Endothelial cell of umbilical vein (primary cell): ENCODE measurements at regions of chr1 and their contacts with region 1.

Region 1: DNA sequence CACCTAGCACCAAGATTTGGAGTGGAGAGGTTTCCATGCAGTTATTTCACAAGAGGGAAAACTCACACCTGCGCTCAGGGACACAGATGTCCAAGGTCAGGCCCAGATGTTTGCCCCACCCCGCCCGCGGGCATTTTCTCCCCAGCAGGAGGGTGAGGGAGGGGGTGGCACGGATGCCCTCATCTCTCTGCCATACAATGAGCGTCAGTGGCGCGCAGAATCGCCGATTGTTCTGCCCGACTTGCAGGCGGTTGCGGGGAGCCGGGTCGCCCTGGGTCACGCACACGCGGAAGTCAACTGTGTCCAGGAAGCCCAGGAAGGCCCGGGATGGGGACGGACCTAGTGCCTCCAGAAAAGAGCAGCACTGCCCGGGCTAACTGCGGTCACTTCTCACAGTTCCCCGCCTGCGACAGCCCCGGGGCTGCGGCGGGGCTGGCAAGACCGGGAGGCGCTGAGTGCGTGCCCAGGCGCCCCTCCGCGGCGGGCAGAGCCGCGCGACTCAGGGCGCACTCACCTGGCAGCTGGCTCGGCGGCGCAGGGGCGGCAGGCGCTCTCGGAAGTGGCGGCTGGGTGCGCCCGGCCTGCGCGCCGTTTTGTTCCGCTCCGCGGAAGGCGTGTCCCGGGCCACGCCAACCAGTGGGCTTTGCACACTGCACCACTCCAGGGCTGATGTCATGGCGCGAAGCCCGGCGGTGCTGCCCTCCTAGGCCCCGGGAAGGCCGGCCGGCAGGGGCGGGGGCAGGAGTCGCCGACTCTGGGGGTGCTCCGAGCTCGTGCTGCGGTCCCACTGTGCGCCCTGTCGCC is at the start of gene CSRP1:
- DNase-seq: peak; percentile 74
- H3K4me3 ChIP-seq: peak within 1 kb of the TSS; percentile 47 to 84 (median 72)
- H3K27ac ChIP-seq: peak within 1 kb of the TSS; percentile 89
- H3K4me1 ChIP-seq: peaks cover 49% of the 10 kb centered on the region
- H3K27me3 ChIP-seq: no peaks in the 10 kb centered on the region
- CTCF ChIP-seq: no peak
- POLR2A ChIP-seq: peak; percentile 96
- total RNA-seq, gene CSRP1: 332 and 393 TPM in 2 replicates

Region 2: GRCh38 chr1:201488817-201489589 is 17.8 kb before region 1 on chr1:
- CTCF ChIA-PET with region 1: interaction called, 1,317 read pairs
- POLR2A ChIA-PET with region 1: interaction called, 124 read pairs
- dilution Hi-C with region 1: no loop called
- intact Hi-C with region 1: loop called (anchors 1 kb)
- DNase-seq: peak; percentile 96
- H3K4me3 ChIP-seq: no peak overlapping the region
- H3K27ac ChIP-seq: peak overlapping the region; percentile 90
- H3K4me1 ChIP-seq: peaks cover 75% of the 10 kb centered on the region
- H3K27me3 ChIP-seq: no peaks in the 10 kb centered on the region
- CTCF ChIP-seq: no peak
- POLR2A ChIP-seq: peak; percentile 28

Region 3: GRCh38 chr1:201495471-201496295 is 11.1 kb before region 1 on chr1:
- CTCF ChIA-PET with region 1: interaction called, 1,317 read pairs
- POLR2A ChIA-PET with region 1: interaction called, 124 read pairs
- dilution Hi-C with region 1: no loop called
- intact Hi-C with region 1: loop called (anchors 1 kb)
- DNase-seq: peak; percentile 86
- H3K4me3 ChIP-seq: no peak overlapping the region
- H3K27ac ChIP-seq: peak overlapping the region; percentile 26
- H3K4me1 ChIP-seq: peaks cover 65% of the 10 kb centered on the region
- H3K27me3 ChIP-seq: no peaks in the 10 kb centered on the region
- CTCF ChIP-seq: no peak
- POLR2A ChIP-seq: no peak

Region 4: DNA sequence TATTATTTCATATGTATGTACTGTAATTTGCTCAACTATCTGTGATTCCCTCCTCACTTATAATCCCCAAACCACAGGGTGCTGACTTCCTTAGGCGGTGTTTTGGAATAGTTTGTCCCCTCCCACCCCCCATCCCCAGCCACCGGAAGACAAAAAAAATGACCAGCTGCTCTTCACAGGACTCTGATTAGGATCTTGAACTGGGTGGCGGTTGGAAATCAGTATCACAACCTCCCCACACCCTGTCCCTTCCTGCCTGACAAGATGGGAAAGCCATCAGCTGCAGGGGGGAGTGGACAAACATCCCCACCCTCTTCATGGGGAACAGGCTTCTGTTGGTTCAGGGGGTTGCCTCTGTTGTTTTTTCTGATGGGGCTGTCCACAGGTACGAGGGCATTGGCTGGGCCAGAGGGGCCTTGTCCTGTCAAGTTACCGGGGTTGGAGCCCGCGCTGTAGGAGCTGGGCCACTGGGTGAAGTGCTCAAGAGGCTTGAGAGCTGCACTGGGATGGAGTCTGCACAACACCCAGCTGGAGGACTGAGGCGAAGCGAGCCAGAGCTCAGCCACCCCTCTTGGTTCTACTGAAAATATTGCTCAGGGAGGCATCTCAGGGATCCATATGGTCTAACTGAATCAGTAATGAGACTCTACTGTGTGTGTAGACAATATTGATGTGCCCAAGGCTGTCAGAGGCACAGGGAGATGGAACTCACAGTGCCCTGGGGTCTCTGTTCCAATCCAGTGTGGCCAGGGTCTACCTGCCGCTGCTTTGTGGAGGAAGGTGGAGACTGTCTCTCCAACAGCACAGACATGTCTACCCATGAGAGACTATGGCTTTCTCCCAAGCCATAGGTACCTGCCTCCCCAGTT is 60.4 kb after region 1 on chr1:
- CTCF ChIA-PET with region 1: no interaction called
- POLR2A ChIA-PET with region 1: no interaction called
- dilution Hi-C with region 1: no loop called
- intact Hi-C with region 1: no loop called
- DNase-seq: no peak
- H3K4me3 ChIP-seq: no peak overlapping the region
- H3K27ac ChIP-seq: no peak overlapping the region
- H3K4me1 ChIP-seq: peaks cover 29% of the 10 kb centered on the region
- H3K27me3 ChIP-seq: no peaks in the 10 kb centered on the region
- CTCF ChIP-seq: no peak
- POLR2A ChIP-seq: no peak